Activated T-helper 1 cell treated with anti-CD3 and anti-CD28 coated beads, Interleukin-12 subunit alpha, Interleukin-12 subunit beta, Interleukin-2, Interleukin-4 antibody, amounts not matched to agents 30 ng/mL and 10 ng/mL and 1 ng/mL, durations not matched to agents 14 hours and 24 hours and 36 hours (primary cell): ENCODE measurements at regions of chr1 and their contacts with region 1.

Region 1: GRCh38 chr1:27011976-27012563 is 580 bp downstream of the TENT5B start:
- DNase-seq: no peak
- H3K4me3 Mint-ChIP-seq: no peak overlapping the region
- H3K27ac Mint-ChIP-seq: no peak overlapping the region
- H3K4me1 Mint-ChIP-seq: peaks cover 5% of the 10 kb centered on the region
- H3K27me3 Mint-ChIP-seq: peaks cover 39% of the 10 kb centered on the region

Region 2: GRCh38 chr1:26838474-26839338 is 173.4 kb before region 1 on chr1:
- intact Hi-C with region 1: no loop called
- DNase-seq: peak; percentile 34
- H3K4me3 Mint-ChIP-seq: peak overlapping the region; percentile 12
- H3K27ac Mint-ChIP-seq: peak overlapping the region; percentile 67
- H3K4me1 Mint-ChIP-seq: peaks cover 19% of the 10 kb centered on the region
- H3K27me3 Mint-ChIP-seq: no peaks in the 10 kb centered on the region

Region 3: GRCh38 chr1:26993237-26994019 is 18.6 kb before region 1 on chr1 and contains the start of gene TRNP1:
- intact Hi-C with region 1: loop called (anchors 1 kb)
- DNase-seq: peak; percentile 69
- H3K4me3 Mint-ChIP-seq: peak within 1 kb of the TSS; percentile 81
- H3K27ac Mint-ChIP-seq: peak within 1 kb of the TSS; percentile 21
- H3K4me1 Mint-ChIP-seq: peaks cover 21% of the 10 kb centered on the region
- H3K27me3 Mint-ChIP-seq: peaks cover 55% of the 10 kb centered on the region
- total RNA-seq, gene TRNP1: 2.0 TPM in 2 replicates

Region 4: DNA sequence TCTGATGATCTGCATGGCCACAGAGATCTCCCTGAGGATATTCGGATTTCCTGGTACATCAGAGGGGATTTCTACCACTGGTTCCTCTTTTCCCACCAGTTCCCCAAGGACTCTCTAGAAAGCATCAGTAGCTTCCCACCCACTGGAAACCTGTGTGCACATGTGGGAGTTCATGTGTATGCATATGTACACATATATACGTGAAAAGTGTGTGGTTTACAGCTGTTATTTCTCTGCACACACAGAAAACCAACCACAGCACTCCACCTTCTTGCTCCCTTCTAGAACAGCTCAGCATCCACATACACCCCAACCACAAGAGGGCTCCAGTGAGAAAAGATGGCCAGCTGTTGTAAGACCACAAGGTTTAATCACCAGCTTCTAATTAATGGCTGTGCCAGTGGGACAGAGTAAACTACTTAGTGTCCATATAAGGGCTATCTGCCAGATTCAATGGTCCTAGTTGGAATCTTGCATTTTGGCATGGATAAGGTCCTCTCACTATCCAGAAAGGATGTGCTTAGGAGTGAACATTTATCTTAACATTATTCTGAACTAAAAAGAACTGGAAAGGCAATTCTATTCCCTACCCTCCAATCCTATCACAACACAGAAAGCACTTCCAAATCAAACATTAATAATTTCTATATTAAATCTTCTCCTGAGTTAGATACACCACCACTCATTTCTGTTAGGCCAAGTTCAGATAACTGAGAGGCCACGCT is 404.5 kb after region 1 on chr1:
- intact Hi-C with region 1: no loop called
- DNase-seq: peak; percentile 44
- H3K4me3 Mint-ChIP-seq: no peak overlapping the region
- H3K27ac Mint-ChIP-seq: no peak overlapping the region
- H3K4me1 Mint-ChIP-seq: peaks cover 47% of the 10 kb centered on the region
- H3K27me3 Mint-ChIP-seq: no peaks in the 10 kb centered on the region